Prostate gland (tissue), 2 donors: ENCODE measurements at regions of chr22 and their contacts with region 1.

Region 1: DNA sequence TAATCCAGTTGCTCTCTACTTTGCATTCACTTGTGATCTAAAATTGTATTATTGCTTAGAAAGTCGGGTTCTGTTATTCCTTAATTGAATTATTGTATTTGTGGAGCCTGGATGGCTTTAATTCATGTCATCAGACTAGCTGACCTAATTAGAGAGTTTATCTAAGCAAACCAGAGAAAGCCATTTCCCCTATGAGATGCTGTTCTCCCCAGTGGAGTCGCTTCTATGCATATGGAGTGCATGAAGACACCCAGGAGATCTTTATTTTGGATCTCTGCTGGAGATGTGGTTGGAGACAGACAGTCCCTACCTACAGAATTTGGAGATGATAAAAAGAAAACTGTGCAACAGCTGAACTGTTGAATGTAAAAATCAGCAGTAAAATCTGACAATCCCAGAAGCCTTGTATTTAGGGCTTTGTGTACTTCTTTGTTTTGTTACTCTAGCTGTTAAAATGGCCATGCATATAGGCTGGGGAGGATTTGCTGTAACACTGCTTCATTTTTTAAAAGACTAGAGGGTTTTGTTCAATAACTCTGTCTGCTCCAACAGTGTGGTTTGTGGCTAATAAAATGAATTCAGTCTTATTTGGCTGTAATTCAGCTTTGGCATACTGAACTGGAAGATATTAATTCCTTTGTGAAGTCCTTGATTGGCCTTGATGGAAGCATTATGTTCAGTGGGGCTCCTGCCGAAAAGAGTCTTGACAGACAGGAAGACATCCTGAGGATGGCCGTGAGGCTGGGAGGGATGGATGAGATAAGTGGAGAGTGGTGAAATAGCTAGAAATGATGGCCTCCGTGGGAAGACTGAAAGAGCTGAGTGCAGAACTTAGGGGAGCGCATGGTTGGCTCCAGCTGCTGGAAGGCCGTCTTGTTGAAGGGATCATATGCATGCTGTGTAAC is 45.0 kb upstream of the MYO18B start:
- DNase-seq: no peak
- H3K4me3 ChIP-seq: no peak overlapping the region
- H3K27ac ChIP-seq: peak overlapping the region in 1 of 2 donors; percentile 17
- H3K4me1 ChIP-seq: no peaks in the 10 kb centered on the region
- H3K27me3 ChIP-seq: no peaks in the 10 kb centered on the region
- CTCF ChIP-seq: no peak
- POLR2A ChIP-seq: no peak

Region 2: GRCh38 chr22:25508161-25508560 is 188.9 kb before region 1 on chr22:
- intact Hi-C with region 1: no loop called
- DNase-seq: no peak
- H3K4me3 ChIP-seq: no peak overlapping the region
- H3K27ac ChIP-seq: no peak overlapping the region
- H3K4me1 ChIP-seq: no peaks in the 10 kb centered on the region
- H3K27me3 ChIP-seq: no peaks in the 10 kb centered on the region
- CTCF ChIP-seq: no peak
- POLR2A ChIP-seq: no peak

Region 3: DNA sequence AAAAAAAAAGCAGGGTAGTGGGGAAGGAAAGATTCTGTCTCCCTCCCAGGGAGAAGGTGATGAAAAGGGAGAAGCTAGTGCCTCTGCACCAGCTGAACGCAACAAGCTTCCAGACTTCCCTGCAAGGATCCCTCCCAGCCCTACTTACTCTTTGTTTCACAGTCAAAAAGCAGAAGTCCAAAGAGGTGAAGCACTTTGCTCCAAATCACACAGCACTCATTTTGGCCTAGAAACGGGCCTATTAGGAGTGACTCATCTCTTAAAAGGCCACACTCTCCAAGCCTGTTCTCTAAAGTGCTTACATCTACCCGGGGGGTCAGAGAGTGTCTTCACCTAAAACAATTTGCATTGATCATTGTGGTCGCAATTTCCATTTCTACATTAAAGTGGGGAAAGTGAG is 150.3 kb before region 1 on chr22:
- intact Hi-C with region 1: loop called (anchors 10 kb)
- DNase-seq: no peak
- H3K4me3 ChIP-seq: no peak overlapping the region
- H3K27ac ChIP-seq: no peak overlapping the region
- H3K4me1 ChIP-seq: peaks cover 12% of the 10 kb centered on the region
- H3K27me3 ChIP-seq: no peaks in the 10 kb centered on the region
- CTCF ChIP-seq: no peak
- POLR2A ChIP-seq: no peak